Right cardiac atrium (tissue), 5 donors: ENCODE measurements at regions of chr5 and their contacts with region 1.

Region 1: DNA sequence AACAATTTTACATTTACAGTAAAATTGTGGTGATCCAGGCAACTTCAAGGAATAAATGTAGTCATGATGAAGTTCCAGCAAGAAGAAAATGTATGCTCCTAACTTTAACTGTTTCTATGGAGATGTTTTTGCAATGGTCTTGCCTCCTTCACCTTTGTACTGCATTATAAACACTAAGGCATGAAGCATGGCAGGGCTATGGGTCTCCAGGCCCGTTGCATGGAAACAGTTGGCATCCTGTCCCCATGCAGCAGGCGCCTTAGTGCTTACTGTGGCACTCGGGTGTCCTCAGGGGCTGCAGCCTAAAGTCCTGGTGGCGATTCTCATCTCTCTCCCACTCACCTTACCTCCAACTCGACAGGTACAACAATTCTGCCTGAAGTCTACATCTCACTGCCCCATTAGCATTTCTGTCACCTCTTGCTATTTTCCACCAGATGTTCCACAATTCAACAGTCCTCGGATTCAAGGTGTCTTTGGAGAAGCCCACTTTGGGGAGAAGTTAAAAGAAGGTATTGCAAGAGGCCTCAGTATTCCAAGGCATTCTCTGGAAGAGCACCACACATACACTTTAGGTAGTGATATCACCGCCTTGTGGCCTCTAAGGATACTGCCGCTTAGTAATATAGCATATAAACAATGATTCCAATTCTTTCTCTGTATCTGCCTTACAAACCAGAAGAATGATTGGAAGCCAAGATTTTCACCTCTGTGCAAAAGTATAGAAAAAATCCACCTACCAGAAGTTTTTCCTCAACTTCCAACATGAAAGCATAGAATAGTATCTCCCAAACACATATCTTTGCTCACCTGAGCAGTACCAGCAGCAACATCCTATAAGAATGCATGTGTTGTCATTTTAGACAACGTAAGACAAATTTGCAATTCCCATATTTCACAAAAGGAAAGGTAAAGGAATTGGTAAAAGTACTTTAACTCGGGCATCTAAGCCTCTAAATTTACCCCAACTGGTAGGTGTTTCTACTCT is 5.1 kb downstream of the LIFR start:
- DNase-seq: no peak
- ATAC-seq: peak in 1 of 2 donors; percentile 41
- H3K4me3 ChIP-seq: peak overlapping the region; percentile 29
- H3K27ac ChIP-seq: peak overlapping the region; percentile 76
- H3K4me1 ChIP-seq: peaks cover 8% of the 10 kb centered on the region
- H3K27me3 ChIP-seq: no peaks in the 10 kb centered on the region

Region 2: GRCh38 chr5:38455797-38456330 is 95.5 kb before region 1 on chr5:
- intact Hi-C with region 1: no loop called
- DNase-seq: no peak
- ATAC-seq: no peak
- H3K4me3 ChIP-seq: no peak overlapping the region
- H3K27ac ChIP-seq: no peak overlapping the region
- H3K4me1 ChIP-seq: peaks cover under 1% of the 10 kb centered on the region
- H3K27me3 ChIP-seq: no peaks in the 10 kb centered on the region

Region 3: DNA sequence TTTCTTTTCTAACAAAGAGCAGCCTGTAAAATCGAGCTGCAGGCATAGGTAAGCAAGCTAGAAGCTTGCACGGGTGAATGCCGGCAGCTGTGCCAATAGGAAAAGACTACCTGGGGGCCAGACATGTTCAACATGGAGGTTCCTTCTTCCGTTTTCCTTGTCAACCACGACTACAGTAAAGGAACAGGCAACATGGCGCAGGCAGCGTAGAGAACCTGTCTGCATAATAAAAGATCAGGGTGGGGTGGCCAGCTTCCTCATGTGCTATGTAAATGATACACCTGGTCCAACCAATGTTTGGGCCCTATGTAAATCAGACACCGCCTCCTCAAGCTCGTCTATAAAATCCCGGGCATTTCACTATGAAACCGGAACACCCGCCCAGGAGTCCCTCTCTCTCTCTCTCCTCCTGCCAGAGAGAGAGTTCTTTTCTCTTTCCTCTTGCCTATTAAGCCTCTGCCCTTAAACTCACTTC is 108.9 kb after region 1 on chr5:
- intact Hi-C with region 1: loop called (anchors 5 to 10 kb)
- DNase-seq: peak in 2 of 3 donors; percentile 55 to 58
- ATAC-seq: peak; percentile 74 to 82
- H3K4me3 ChIP-seq: no peak overlapping the region
- H3K27ac ChIP-seq: peak overlapping the region; percentile 83
- H3K4me1 ChIP-seq: peaks cover 4% of the 10 kb centered on the region
- H3K27me3 ChIP-seq: no peaks in the 10 kb centered on the region